ENCODE measurements at regions of chr10 and their contacts with region 1.

Region 1: DNA sequence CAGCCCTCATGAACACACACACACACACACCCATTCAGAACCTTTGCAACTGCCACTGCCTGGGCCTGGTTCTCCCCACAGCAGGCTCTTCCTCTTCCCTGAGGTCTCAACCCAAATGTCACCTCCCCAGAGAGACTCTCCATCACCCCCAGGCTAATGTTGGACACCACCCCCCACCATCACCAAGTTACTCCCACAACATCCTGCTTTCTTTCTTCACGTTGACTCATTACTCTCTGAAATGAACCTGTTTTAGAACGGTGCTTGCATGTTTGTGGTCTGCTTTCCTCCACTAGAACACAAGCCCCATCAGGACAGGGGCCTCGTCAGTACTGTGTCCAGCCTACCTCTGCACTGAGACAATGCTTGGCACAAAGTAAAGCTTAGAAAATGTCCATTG is 16.0 kb downstream of the AFAP1L2 start:
- DNase-seq: no peak
- H3K4me3 ChIP-seq: no peak overlapping the region
- H3K27ac ChIP-seq: no peak overlapping the region
- H3K4me1 ChIP-seq: peaks cover 0 to 13% (median 2%) of the 10 kb centered on the region in 4 experiments; a peak in 3 of 7 replicates
- H3K27me3 ChIP-seq: no peaks in the 10 kb centered on the region
- CTCF ChIP-seq: no peak
- EP300 ChIP-seq: no peak
- POLR2A ChIP-seq: no peak
- RAD21 ChIP-seq: no peak

Region 2: GRCh38 chr10:114166084-114166483 is 222.2 kb before region 1 on chr10:
- CTCF ChIA-PET with region 1: no interaction called
- POLR2A ChIA-PET with region 1: no interaction called
- DNase-seq: no peak
- H3K4me3 ChIP-seq: peak overlapping the region in 1 of 4 experiments; percentile 33; a peak in 1 of 8 replicates
- H3K27ac ChIP-seq: no peak overlapping the region
- H3K4me1 ChIP-seq: peaks cover 0 to 10% (median 0%) of the 10 kb centered on the region in 4 experiments; a peak in 4 of 7 replicates
- H3K27me3 ChIP-seq: no peaks in the 10 kb centered on the region
- CTCF ChIP-seq: no peak
- EP300 ChIP-seq: no peak
- POLR2A ChIP-seq: no peak
- RAD21 ChIP-seq: no peak

Region 3: DNA sequence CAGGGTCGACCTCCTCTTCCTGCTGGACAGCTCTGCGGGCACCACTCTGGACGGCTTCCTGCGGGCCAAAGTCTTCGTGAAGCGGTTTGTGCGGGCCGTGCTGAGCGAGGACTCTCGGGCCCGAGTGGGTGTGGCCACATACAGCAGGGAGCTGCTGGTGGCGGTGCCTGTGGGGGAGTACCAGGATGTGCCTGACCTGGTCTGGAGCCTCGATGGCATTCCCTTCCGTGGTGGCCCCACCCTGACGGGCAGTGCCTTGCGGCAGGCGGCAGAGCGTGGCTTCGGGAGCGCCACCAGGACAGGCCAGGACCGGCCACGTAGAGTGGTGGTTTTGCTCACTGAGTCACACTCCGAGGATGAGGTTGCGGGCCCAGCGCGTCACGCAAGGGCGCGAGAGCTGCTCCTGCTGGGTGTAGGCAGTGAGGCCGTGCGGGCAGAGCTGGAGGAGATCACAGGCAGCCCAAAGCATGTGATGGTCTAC is 102.3 kb before region 1 on chr10:
- CTCF ChIA-PET with region 1: interaction called, 13 read pairs
- POLR2A ChIA-PET with region 1: no interaction called
- DNase-seq: no peak
- H3K4me3 ChIP-seq: no peak overlapping the region
- H3K27ac ChIP-seq: no peak overlapping the region
- H3K4me1 ChIP-seq: no peaks in the 10 kb centered on the region; a peak in 2 of 7 replicates
- H3K27me3 ChIP-seq: no peaks in the 10 kb centered on the region
- CTCF ChIP-seq: no peak
- EP300 ChIP-seq: no peak
- POLR2A ChIP-seq: no peak
- RAD21 ChIP-seq: no peak

Region 4: DNA sequence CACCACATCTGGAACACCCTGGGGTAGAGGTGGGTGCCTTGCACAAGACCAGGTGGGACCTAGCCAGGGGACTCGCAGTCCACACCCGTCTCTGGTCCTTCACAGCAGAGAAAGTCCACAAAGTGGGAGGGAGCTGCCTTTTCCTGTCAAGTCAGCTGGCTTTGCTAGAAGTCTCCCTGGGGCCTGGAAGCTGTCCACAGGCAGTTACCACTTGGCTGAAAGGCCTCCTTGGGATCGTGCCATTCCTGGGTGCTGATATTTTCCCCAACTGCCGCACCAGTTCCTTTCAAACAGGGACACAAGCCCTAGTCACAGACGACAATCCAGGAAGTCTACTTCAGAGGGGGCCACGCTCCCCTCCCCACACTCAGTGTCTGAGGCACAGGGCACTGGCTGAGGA is 59.4 kb before region 1 on chr10:
- CTCF ChIA-PET with region 1: interaction called, 13 read pairs
- POLR2A ChIA-PET with region 1: no interaction called
- DNase-seq: no peak
- H3K4me3 ChIP-seq: no peak overlapping the region
- H3K27ac ChIP-seq: no peak overlapping the region
- H3K4me1 ChIP-seq: no peaks in the 10 kb centered on the region; a peak in 1 of 7 replicates
- H3K27me3 ChIP-seq: no peaks in the 10 kb centered on the region
- CTCF ChIP-seq: no peak
- EP300 ChIP-seq: no peak
- POLR2A ChIP-seq: no peak
- RAD21 ChIP-seq: no peak

Region 5: DNA sequence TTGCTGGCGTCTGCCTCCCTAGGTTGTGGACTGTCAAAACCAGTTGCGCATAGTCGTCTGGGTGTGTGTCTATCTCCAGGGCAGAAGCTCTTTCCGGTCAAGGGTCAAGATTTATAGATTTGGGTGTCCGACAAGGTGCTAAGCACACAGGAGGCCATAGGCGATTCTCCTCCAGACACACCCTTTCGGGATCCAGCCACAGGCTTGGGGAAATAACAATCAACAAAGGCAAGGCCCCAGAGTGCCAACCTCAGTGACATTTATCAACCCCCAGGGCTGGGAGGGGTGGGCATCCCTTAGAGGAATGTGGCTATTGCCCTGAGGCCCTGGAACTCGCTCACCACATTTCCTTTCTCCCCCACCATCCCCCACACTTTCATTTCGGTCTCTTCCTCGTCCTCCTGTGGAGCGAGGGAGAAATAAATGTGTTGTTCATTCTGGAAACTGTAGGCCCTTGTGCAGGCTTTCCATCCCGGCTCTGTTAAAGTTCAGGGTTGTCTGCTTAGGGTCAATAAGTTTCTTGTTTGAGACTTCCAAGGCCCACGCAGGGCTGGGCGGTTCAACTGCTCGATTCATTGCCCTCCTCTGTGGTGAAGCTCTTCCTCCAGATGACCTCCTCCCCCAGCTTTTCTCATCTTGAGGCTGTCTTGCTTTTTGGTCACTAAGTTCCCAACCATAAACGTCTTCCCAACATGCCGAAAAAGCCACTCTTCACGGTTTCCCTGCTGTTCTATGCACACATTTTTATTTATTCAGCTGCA is 41.8 kb before region 1 on chr10:
- CTCF ChIA-PET with region 1: interaction called, 48 read pairs
- POLR2A ChIA-PET with region 1: no interaction called
- DNase-seq: no peak
- H3K4me3 ChIP-seq: no peak overlapping the region
- H3K27ac ChIP-seq: no peak overlapping the region
- H3K4me1 ChIP-seq: peaks cover 0 to 7% (median 0%) of the 10 kb centered on the region in 4 experiments; a peak in 3 of 7 replicates
- H3K27me3 ChIP-seq: no peaks in the 10 kb centered on the region
- CTCF ChIP-seq: no peak
- EP300 ChIP-seq: no peak
- POLR2A ChIP-seq: no peak
- RAD21 ChIP-seq: no peak

Region 6: GRCh38 chr10:114367041-114367818 is 21.0 kb before region 1 on chr10:
- CTCF ChIA-PET with region 1: interaction called, 209 read pairs
- POLR2A ChIA-PET with region 1: no interaction called
- DNase-seq: no peak
- H3K4me3 ChIP-seq: no peak overlapping the region
- H3K27ac ChIP-seq: no peak overlapping the region
- H3K4me1 ChIP-seq: no peaks in the 10 kb centered on the region; a peak in 1 of 7 replicates
- H3K27me3 ChIP-seq: no peaks in the 10 kb centered on the region
- CTCF ChIP-seq: no peak
- EP300 ChIP-seq: no peak
- POLR2A ChIP-seq: no peak
- RAD21 ChIP-seq: no peak

Region 7: DNA sequence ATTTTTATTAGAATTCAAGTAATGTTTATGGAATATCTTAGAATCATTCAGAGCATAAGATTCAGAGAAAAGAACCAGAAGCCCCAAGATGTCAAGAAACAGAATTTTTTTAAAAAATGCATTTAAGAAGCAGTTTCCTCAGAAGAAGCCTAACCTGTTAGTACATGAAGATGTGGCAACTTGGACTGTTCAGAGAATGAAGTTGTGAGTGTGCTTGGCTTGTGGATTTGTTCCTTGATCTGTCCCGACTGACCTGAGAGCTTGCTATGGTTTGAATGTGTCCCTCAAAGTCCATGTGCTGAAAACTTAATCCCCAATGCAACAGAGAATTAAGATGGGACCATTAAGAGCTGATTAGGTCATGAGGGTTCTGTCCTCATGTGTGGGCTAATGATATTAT is 29.8 kb after region 1 on chr10:
- CTCF ChIA-PET with region 1: interaction called, 10 read pairs
- POLR2A ChIA-PET with region 1: no interaction called
- DNase-seq: no peak
- H3K4me3 ChIP-seq: no peak overlapping the region
- H3K27ac ChIP-seq: no peak overlapping the region
- H3K4me1 ChIP-seq: no peaks in the 10 kb centered on the region
- H3K27me3 ChIP-seq: peaks cover 0 to 1% (median 0%) of the 10 kb centered on the region in 4 experiments; a peak in 2 of 7 replicates
- CTCF ChIP-seq: no peak
- EP300 ChIP-seq: no peak
- POLR2A ChIP-seq: no peak
- RAD21 ChIP-seq: no peak

Region 8: DNA sequence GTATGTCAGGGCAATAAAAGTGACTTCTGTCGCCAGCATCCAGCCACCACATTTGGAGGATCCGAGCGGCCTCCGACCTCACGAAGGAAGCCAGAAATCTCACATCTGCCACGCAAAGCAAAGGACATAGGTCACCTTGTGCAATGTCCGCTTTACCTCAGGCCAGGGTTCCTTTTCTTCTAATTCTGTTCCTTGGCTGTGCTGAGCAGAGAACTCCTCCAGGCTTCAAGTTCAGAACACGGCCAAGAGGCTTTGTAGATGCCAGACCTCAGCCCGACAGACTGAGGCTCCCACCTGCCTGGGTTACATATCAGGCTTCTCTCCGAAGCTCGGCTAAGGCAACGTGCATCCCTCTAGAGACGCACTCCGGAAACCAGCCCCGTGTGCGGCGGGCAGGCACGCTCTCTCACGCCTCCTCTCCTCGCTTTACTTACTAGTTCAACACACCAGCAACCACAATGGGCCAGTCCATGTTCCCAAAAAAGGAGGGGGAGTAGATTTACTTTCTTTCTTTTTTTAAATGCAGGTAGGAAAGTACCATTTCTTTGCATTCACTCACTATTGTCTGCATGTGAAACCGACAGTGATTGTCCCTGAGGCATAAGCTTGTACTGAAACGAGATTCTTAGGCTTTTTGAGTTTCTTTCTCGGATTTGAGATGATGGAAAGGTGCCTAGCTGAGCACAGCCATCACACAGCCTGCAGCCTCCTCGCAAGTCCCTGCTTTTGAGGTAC is 138.4 kb after region 1 on chr10:
- CTCF ChIA-PET with region 1: no interaction called
- POLR2A ChIA-PET with region 1: no interaction called
- DNase-seq: peak; percentile 77 to 83
- H3K4me3 ChIP-seq: peak overlapping the region; percentile 45 to 73 (median 66)
- H3K27ac ChIP-seq: peak overlapping the region; percentile 26
- H3K4me1 ChIP-seq: peaks cover 3 to 23% (median 9%) of the 10 kb centered on the region in 4 experiments; a peak in 5 of 7 replicates
- H3K27me3 ChIP-seq: no peaks in the 10 kb centered on the region
- CTCF ChIP-seq: no peak
- EP300 ChIP-seq: peak in 1 of 2 experiments; percentile 97; a peak in 2 of 3 replicates
- POLR2A ChIP-seq: peak; percentile 66 to 91
- RAD21 ChIP-seq: no peak

Measured in H1 (cell line).